B cell (primary cell): ENCODE measurements at regions of chr19 and their contacts with region 1.

Region 1: GRCh38 chr19:18203863-18204393 is at the start of gene RAB3A:
- DNase-seq: peak; percentile 100
- ATAC-seq: peak; percentile 83
- H3K4me3 ChIP-seq: peak within 1 kb of the TSS; percentile 74 to 94 (median 91)
- H3K4me3 Mint-ChIP-seq: peak within 1 kb of the TSS; percentile 95
- H3K27ac ChIP-seq: peak within 1 kb of the TSS; percentile 86 to 98
- H3K27ac Mint-ChIP-seq: peak within 1 kb of the TSS; percentile 96
- H3K4me1 ChIP-seq: peaks cover 15 to 29% of the 10 kb centered on the region in 2 donors
- H3K4me1 Mint-ChIP-seq: peaks cover 28% of the 10 kb centered on the region
- H3K27me3 ChIP-seq: peaks cover 0 to 5% (median 1%) of the 10 kb centered on the region in 4 experiments
- H3K27me3 Mint-ChIP-seq: peaks cover 6% of the 10 kb centered on the region
- CTCF ChIP-seq: no peak
- total RNA-seq, gene RAB3A: 9.6 and 10.4 TPM in 2 replicates

Region 2: DNA sequence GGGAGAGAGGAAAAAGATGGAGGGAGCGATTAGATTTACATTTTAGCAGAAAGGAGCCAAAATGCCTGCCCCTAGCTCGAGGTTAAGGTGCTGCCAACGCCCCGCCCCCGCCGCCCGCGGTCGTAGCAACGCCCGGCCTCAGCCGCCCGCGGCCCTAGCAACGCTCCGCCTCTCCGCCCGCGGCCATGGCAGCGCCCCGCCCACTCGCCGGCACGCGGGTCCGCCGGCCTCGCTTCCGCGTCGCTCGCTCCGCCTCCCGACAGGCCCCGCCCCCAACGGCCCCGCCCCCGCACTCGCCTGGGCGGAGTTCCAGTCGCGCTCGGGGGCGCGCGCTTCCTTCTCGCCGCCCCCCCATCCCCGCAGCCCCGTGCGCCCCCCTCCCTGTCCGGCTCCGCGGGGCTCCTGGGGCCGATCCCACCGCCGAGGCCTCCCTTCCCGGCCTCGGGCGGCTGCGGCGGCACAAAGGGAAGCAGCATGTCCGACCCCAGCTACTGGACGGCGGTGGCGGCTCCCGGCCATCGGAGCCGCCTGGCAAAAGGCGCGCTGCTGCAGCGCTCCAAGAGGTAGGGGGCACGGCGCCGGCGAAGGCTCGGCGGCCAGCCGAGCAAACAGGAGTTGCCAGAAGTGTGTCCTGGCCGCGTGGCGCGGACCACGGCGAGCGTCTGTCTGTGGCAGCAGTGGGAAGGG is 86.1 kb before region 1 on chr19:
- CTCF ChIA-PET with region 1: interaction called, 3 read pairs
- POLR2A ChIA-PET with region 1: no interaction called
- intact Hi-C with region 1: loop called (anchors 1 kb)
- DNase-seq: peak; percentile 96
- ATAC-seq: peak; percentile 94
- H3K4me3 ChIP-seq: peak overlapping the region in 4 of 5 experiments; percentile 64 to 71 (median 66)
- H3K4me3 Mint-ChIP-seq: peak overlapping the region; percentile 86
- H3K27ac ChIP-seq: peak overlapping the region; percentile 47 to 76
- H3K27ac Mint-ChIP-seq: peak overlapping the region; percentile 85
- H3K4me1 ChIP-seq: peaks cover 30 to 36% of the 10 kb centered on the region in 2 donors
- H3K4me1 Mint-ChIP-seq: peaks cover 52% of the 10 kb centered on the region
- H3K27me3 ChIP-seq: no peaks in the 10 kb centered on the region
- H3K27me3 Mint-ChIP-seq: no peaks in the 10 kb centered on the region
- CTCF ChIP-seq: no peak

Region 3: DNA sequence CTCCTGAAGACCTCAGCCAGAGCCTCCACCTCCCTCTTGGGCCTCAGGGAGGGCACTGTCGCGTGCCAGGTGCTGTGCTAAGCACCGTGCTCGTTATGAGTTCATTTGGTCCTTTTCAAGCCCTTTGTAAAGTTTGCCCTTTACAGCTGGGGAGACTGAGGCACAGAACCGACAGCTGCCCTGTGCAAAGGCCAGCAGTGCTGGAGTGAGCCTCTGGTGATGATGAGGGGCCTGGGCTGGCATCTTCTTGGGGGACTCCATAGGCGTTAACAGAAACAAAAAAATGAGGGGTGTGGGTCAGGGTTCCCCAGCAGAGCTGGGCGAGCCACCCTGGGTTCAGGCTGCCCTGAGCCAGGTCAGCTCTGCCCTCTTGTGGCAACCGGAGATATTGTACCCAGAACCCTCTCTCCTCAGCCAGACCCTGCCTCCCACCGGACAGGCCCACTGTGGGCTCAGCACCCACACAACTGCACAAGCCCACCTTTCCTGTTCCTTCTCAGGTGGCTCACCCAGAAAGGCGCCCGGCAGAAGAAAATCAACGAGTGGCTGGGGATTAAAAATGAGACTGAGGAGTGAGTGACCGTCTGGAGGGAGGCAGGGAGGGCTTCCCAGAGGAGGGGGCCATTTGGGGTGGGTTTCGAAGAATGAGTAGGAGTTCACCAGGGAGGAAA is 35.8 kb before region 1 on chr19:
- CTCF ChIA-PET with region 1: interaction called, 5 read pairs
- POLR2A ChIA-PET with region 1: interaction called, 7 read pairs
- intact Hi-C with region 1: loop called (anchors 1 kb)
- DNase-seq: peak; percentile 79
- ATAC-seq: peak; percentile 28
- H3K4me3 ChIP-seq: peak overlapping the region in 4 of 5 experiments; percentile 21 to 47 (median 33)
- H3K4me3 Mint-ChIP-seq: peak overlapping the region; percentile 87
- H3K27ac ChIP-seq: peak overlapping the region; percentile 97 to 99
- H3K27ac Mint-ChIP-seq: peak overlapping the region; percentile 98
- H3K4me1 ChIP-seq: peaks cover 50 to 58% of the 10 kb centered on the region in 2 donors
- H3K4me1 Mint-ChIP-seq: peaks cover 52% of the 10 kb centered on the region
- H3K27me3 ChIP-seq: no peaks in the 10 kb centered on the region
- H3K27me3 Mint-ChIP-seq: no peaks in the 10 kb centered on the region
- CTCF ChIP-seq: peak; percentile 80

Region 4: DNA sequence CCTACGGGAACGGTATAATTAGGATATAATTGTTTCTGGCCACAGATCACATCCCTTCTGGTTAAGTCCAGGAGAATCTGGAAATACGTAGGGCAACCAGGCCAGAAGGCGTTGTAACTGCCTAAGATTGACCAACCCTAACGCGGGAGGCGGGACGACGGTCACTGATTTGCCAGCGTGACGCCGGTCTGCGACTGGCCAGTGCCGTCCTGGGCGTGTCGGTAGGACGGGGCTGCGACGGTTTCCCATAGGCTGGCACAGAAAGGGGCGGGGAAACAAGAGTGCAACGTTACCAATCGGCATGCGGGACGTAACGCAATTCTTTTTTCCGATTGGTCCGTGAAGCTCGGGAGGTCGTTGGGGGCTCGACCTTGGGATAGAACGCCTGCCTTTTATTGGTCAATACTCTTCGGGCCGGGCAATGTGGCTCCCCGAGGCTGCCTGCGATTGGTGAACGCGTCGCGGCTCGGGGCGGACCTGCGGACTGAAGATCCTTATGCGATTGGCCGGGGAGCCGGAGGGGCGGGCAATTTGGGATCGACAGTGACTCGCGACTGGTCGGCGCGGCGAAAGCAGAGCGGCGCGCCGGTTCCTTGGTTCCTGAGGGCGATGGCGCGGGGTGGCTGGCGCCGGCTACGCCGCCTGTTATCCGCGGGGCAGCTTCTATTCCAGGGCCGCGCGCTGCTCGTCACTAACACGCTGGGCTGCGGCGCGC is 11.1 kb before region 1 on chr19 and contains the start of gene MPV17L2:
- CTCF ChIA-PET with region 1: interaction called, 25 read pairs
- POLR2A ChIA-PET with region 1: interaction called, 27 read pairs
- intact Hi-C with region 1: loop called (anchors 1 kb)
- DNase-seq: peak; percentile 100
- ATAC-seq: peak; percentile 83
- H3K4me3 ChIP-seq: peak within 1 kb of the TSS; percentile 76 to 92 (median 82)
- H3K4me3 Mint-ChIP-seq: peak within 1 kb of the TSS; percentile 93
- H3K27ac ChIP-seq: peak within 1 kb of the TSS; percentile 86 to 93
- H3K27ac Mint-ChIP-seq: peak within 1 kb of the TSS; percentile 97
- H3K4me1 ChIP-seq: peaks cover 25 to 40% of the 10 kb centered on the region in 2 donors
- H3K4me1 Mint-ChIP-seq: peaks cover 38% of the 10 kb centered on the region
- H3K27me3 ChIP-seq: no peaks in the 10 kb centered on the region
- H3K27me3 Mint-ChIP-seq: no peaks in the 10 kb centered on the region
- CTCF ChIP-seq: no peak
- total RNA-seq, gene MPV17L2: 6.5 and 8.6 TPM in 2 replicates

Region 5: GRCh38 chr19:18322759-18323460 is 119.0 kb after region 1 on chr19 and contains the start of gene LSM4:
- CTCF ChIA-PET with region 1: interaction called, 30 read pairs
- POLR2A ChIA-PET with region 1: interaction called, 12 read pairs
- intact Hi-C with region 1: loop called (anchors 1 kb)
- DNase-seq: peak; percentile 100
- ATAC-seq: peak; percentile 94
- H3K4me3 ChIP-seq: peak within 1 kb of the TSS; percentile 81 to 97 (median 91)
- H3K4me3 Mint-ChIP-seq: peak within 1 kb of the TSS; percentile 87
- H3K27ac ChIP-seq: peak within 1 kb of the TSS; percentile 87 to 90
- H3K27ac Mint-ChIP-seq: peak within 1 kb of the TSS; percentile 94
- H3K4me1 ChIP-seq: peaks cover 29 to 45% of the 10 kb centered on the region in 2 donors
- H3K4me1 Mint-ChIP-seq: peaks cover 47% of the 10 kb centered on the region
- H3K27me3 ChIP-seq: no peaks in the 10 kb centered on the region
- H3K27me3 Mint-ChIP-seq: no peaks in the 10 kb centered on the region
- CTCF ChIP-seq: peak; percentile 62
- total RNA-seq, gene LSM4: 66.3 and 70.0 TPM in 2 replicates

Region 6: GRCh38 chr19:18408053-18408476 is 204.1 kb after region 1 on chr19:
- CTCF ChIA-PET with region 1: interaction called, 6 read pairs
- POLR2A ChIA-PET with region 1: no interaction called
- intact Hi-C with region 1: loop called (anchors 2 kb)
- DNase-seq: peak; percentile 90
- ATAC-seq: peak; percentile 90
- H3K4me3 ChIP-seq: no peak overlapping the region
- H3K4me3 Mint-ChIP-seq: peak overlapping the region; percentile 44
- H3K27ac ChIP-seq: peak overlapping the region in 1 of 2 donors; percentile 15
- H3K27ac Mint-ChIP-seq: peak overlapping the region; percentile 89
- H3K4me1 ChIP-seq: peaks cover 18 to 19% of the 10 kb centered on the region in 2 donors
- H3K4me1 Mint-ChIP-seq: peaks cover 23% of the 10 kb centered on the region
- H3K27me3 ChIP-seq: peaks cover 0 to 20% (median 7%) of the 10 kb centered on the region in 4 experiments
- H3K27me3 Mint-ChIP-seq: peaks cover 18% of the 10 kb centered on the region
- CTCF ChIP-seq: peak; percentile 31

Region 7: GRCh38 chr19:19528721-19529490 is 1325.0 kb after region 1 on chr19 and contains the start of gene YJEFN3:
- CTCF ChIA-PET with region 1: no interaction called
- POLR2A ChIA-PET with region 1: no interaction called
- intact Hi-C with region 1: no loop called
- DNase-seq: no peak
- ATAC-seq: no peak
- H3K4me3 ChIP-seq: no peak within 1 kb of the TSS
- H3K4me3 Mint-ChIP-seq: no peak within 1 kb of the TSS
- H3K27ac ChIP-seq: no peak within 1 kb of the TSS
- H3K27ac Mint-ChIP-seq: peak within 1 kb of the TSS; percentile 59
- H3K4me1 ChIP-seq: peaks cover 15 to 41% of the 10 kb centered on the region in 2 donors
- H3K4me1 Mint-ChIP-seq: peaks cover 23% of the 10 kb centered on the region
- H3K27me3 ChIP-seq: no peaks in the 10 kb centered on the region
- H3K27me3 Mint-ChIP-seq: no peaks in the 10 kb centered on the region
- CTCF ChIP-seq: no peak
- total RNA-seq, gene YJEFN3: 6.9 and 8.8 TPM in 2 replicates